Heart left ventricle (tissue), 16 donors: ENCODE measurements at regions of chr15 and their contacts with region 1.

Region 1: GRCh38 chr15:89129123-89129815 is 41.0 kb downstream of the ABHD2 start:
- DNase-seq: peak in 1 of 5 donors; percentile 66
- ATAC-seq: no peak
- H3K4me3 ChIP-seq: no peak overlapping the region
- H3K27ac ChIP-seq: peak overlapping the region in 8 of 12 donors; percentile 6 to 88 (median 44)
- H3K4me1 ChIP-seq: peaks cover 0 to 83% (median 55%) of the 10 kb centered on the region in 12 donors
- H3K27me3 ChIP-seq: no peaks in the 10 kb centered on the region
- CTCF ChIP-seq: peak; percentile 25 to 70 (median 59)
- POLR2A ChIP-seq: no peak

Region 2: GRCh38 chr15:89057504-89058133 is 71.7 kb before region 1 on chr15:
- intact Hi-C with region 1: loop called in 3 of 10 experiments (anchors 5 kb)
- DNase-seq: peak; percentile 73 to 92 (median 80)
- ATAC-seq: peak; percentile 71 to 92 (median 92)
- H3K4me3 ChIP-seq: no peak overlapping the region
- H3K27ac ChIP-seq: no peak overlapping the region
- H3K4me1 ChIP-seq: peaks cover 0 to 9% (median 5%) of the 10 kb centered on the region in 12 donors
- H3K27me3 ChIP-seq: no peaks in the 10 kb centered on the region
- CTCF ChIP-seq: peak; percentile 96 to 100 (median 99)
- POLR2A ChIP-seq: no peak

Region 3: DNA sequence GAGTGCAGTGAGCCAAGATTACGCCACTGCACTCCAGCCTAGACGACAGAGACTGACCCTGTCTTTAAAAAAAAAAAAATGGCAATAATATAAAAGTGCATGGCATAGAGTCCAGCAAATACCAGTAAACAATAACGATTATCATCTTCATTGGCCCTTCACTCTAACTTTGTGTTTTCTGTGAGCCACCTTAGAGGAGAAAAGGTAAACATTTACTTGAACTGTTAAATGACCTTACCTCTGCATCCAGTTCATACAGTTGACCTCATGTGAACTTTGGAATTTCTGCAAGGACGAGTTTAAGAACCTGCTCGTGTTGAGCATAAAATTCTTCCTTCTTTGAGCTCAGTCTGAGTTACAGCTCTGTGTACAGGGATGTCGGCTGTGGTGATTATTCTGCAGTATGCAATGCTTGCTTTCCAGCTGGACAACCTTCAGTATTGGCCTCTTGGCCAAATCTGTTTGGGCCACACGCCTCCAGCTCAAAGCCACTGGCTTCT is 35.5 kb after region 1 on chr15:
- intact Hi-C with region 1: loop called in 2 of 10 experiments (anchors 5 kb)
- DNase-seq: peak in 2 of 5 donors; percentile 36 to 37
- ATAC-seq: peak; percentile 50 to 83 (median 62)
- H3K4me3 ChIP-seq: no peak overlapping the region
- H3K27ac ChIP-seq: peak overlapping the region in 5 of 12 donors; percentile 5 to 26 (median 18)
- H3K4me1 ChIP-seq: peaks cover 3 to 57% (median 39%) of the 10 kb centered on the region in 12 donors
- H3K27me3 ChIP-seq: no peaks in the 10 kb centered on the region
- CTCF ChIP-seq: no peak
- POLR2A ChIP-seq: no peak

Region 4: GRCh38 chr15:89197503-89197971 is 68.3 kb after region 1 on chr15:
- intact Hi-C with region 1: no loop called
- DNase-seq: no peak
- ATAC-seq: peak in 3 of 4 donors; percentile 33 to 71 (median 38)
- H3K4me3 ChIP-seq: no peak overlapping the region
- H3K27ac ChIP-seq: peak overlapping the region in 7 of 12 donors; percentile 7 to 72 (median 55)
- H3K4me1 ChIP-seq: peaks cover 0 to 44% (median 16%) of the 10 kb centered on the region in 12 donors
- H3K27me3 ChIP-seq: no peaks in the 10 kb centered on the region
- CTCF ChIP-seq: no peak
- POLR2A ChIP-seq: no peak